ENCODE measurements at regions of chr14 and their contacts with region 1.

Region 1: DNA sequence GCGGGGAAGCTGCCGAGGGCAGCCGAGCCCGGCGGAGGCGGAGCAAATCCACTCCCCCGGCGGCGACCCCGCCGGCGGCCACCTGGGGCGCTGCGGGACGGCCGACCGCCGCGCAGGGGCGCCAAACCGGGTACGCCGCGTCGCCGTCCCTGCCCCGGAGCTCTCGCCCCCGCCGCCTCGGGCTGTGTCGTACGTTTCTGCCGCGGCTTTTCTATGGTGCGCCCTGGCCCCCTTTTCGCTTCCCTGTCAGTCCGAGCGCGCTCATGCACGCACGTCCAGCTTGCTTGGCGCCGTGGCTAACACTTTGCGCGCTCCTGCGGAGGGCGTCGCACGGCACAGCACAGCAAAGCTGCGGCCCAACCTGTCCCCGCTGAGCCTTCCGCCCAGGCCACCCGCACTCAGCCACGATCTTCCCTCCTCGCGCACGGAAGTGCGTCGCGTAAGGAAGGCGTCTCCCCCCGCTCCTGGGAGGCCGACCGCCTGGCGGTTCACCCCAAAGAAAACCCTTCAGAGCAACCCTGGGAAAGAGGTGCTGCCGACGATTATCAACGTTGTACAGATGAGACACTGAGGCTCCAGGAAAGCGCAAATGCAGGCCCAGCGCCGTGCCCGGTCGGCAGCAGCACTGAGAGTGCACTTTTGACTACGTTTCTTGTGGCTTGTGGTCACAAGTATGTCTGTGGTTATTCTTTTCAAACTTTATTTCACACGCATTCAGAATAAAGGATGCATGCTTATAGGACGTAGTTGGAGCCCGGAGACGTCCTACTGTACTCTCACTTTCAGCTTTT is at the start of gene HECTD1:
- DNase-seq: peak; percentile 46
- ATAC-seq: peak; percentile 93
- H3K4me3 ChIP-seq: peak within 1 kb of the TSS; percentile 67 to 75
- H3K27ac ChIP-seq: peak within 1 kb of the TSS; percentile 93
- H3K4me1 ChIP-seq: peaks cover 5% of the 10 kb centered on the region; the same call in 1 of the 2 replicates
- H3K27me3 ChIP-seq: no peaks in the 10 kb centered on the region
- CTCF ChIP-seq: peak; percentile 90
- total RNA-seq, gene HECTD1: 101 TPM

Region 2: DNA sequence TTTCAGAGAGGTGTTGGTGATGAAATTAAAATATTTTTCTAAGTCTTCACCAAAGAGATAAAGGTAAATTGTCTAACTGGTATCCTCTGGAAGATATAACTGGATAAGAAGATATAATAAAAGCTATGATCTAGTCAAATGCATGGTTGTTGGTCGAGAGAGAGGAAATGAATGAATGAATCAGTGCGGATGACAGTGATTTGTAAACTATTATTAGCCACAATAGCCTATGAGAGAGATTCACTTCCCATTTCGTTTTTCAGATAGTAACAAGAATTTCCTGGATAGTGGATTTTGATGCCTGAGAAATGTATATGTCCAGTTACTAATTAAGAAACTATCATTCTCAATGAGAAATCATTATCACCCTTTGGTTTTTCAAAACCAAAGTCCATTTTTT is 149.3 kb after region 1 on chr14:
- CTCF ChIA-PET with region 1: no interaction called
- POLR2A ChIA-PET with region 1: no interaction called
- in situ Hi-C with region 1: no loop called
- intact Hi-C with region 1: loop called (anchors 10 kb)
- DNase-seq: no peak
- ATAC-seq: no peak
- H3K4me3 ChIP-seq: no peak overlapping the region
- H3K27ac ChIP-seq: no peak overlapping the region
- H3K4me1 ChIP-seq: no peaks in the 10 kb centered on the region
- H3K27me3 ChIP-seq: no peaks in the 10 kb centered on the region
- CTCF ChIP-seq: no peak

Measured in Panc1 (cell line).